Pancreas (tissue), 10 donors: ENCODE measurements at regions of chr1 and their contacts with region 1.

Region 1: GRCh38 chr1:114282751-114283403 is 129.2 kb upstream of the SYT6 start:
- DNase-seq: peak; percentile 71 to 91 (median 83)
- ATAC-seq: peak; percentile 95 to 100 (median 99)
- H3K4me3 ChIP-seq: no peak overlapping the region
- H3K27ac ChIP-seq: no peak overlapping the region
- H3K4me1 ChIP-seq: no peaks in the 10 kb centered on the region
- H3K27me3 ChIP-seq: no peaks in the 10 kb centered on the region
- CTCF ChIP-seq: peak; percentile 60 to 84 (median 76)

Region 2: GRCh38 chr1:113982033-113982931 is 300.6 kb before region 1 on chr1:
- intact Hi-C with region 1: loop called in 2 of 3 experiments (anchors 5 kb)
- DNase-seq: peak in 2 of 6 donors; percentile 34 to 50
- ATAC-seq: peak; percentile 23 to 58 (median 57)
- H3K4me3 ChIP-seq: no peak overlapping the region
- H3K27ac ChIP-seq: no peak overlapping the region
- H3K4me1 ChIP-seq: peaks cover 0 to 9% (median 0%) of the 10 kb centered on the region in 3 donors
- H3K27me3 ChIP-seq: no peaks in the 10 kb centered on the region
- CTCF ChIP-seq: no peak

Region 3: DNA sequence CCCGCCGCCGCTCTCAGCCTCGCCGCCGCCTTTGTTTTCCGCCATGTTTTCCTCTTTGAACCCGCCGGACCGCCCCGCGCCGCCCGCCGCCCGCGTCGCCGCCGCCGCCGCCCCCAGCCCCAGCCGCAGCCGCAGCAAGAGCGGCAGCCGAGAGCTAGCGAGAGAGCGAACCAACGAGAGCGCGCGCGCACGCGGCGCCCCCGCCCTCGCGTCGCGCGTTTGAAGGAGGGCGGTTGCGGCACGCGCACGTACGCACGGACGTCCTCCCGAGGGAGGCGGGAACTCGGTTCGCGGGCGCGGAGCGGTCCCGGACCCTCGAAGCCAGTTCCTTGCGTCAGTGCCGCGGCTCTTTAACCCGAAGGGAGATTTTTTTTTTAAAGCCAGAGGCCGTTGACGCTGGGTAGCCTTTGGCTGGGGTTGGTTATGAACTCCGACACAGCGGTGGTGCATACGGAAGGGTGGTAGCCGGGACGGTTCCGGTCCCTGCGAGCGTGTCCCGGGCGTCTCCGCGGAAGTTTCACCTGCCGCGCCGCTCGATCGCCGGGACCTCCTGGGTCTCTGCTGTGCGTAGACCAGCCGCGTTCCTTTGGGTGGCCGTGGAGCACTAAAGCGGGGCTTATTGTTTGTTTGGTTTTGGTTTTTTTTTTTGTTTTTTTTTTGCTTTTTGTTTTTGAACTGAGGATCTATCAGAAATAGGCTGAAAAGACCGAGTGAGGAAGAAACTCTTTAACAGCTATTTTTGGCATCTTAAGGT is 228.3 kb after region 1 on chr1 and contains the start of gene TRIM33:
- intact Hi-C with region 1: no loop called
- DNase-seq: peak; percentile 88 to 95 (median 90)
- ATAC-seq: peak; percentile 93 to 96 (median 94)
- H3K4me3 ChIP-seq: peak within 1 kb of the TSS; percentile 58 to 98 (median 91)
- H3K27ac ChIP-seq: peak within 1 kb of the TSS; percentile 89 to 97 (median 95)
- H3K4me1 ChIP-seq: peaks cover 7 to 21% (median 17%) of the 10 kb centered on the region in 3 donors
- H3K27me3 ChIP-seq: no peaks in the 10 kb centered on the region
- CTCF ChIP-seq: no peak
- total RNA-seq, gene TRIM33: 12.0 to 19.1 (median 15.6) TPM